ENCODE measurements at regions of chr1 and their contacts with region 1.

Region 1: DNA sequence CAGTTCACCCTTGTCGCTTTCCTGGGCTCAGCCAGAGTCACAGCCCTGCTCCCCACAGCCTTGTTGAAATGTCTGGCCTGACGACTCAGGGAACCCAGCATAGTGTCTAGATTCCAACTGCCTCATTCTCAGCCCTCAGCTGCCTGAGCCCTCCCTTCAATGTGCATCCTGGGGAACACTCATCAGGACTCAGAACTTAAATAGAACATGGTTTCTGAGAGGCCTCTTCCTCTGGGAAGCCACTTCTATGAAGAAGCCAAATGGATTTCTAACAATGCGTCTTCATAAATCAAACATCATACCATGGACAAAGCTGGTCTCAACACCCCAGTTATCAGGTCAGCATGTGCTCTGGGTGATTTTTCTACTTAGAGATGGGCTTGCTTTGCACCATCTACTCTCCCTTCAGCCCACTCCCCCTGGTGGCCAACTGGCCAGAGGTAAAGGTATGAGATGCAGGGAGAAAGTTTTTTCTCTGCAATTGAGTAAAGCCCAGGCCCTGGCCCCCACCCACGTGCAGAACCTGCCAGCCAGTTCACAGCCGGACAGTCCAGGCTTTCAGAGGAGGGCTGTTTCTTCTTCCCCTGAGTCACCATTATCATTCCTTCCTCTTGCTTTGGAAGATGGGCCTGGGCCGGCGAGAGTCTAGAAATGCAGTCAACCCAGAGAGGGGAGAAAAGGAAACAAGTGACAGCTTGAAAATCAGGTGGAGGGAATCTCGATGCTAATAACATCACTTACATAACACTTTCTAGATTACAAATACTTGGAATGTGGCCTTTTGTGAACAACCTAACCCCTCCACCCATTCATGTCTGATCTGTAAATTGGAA is 32.1 kb downstream of the CD244 start:
- DNase-seq: peak; percentile 86
- H3K4me3 ChIP-seq: no peak overlapping the region
- H3K27ac ChIP-seq: no peak overlapping the region
- H3K4me1 ChIP-seq: no peaks in the 10 kb centered on the region
- H3K27me3 ChIP-seq: peaks cover 0 to 5% (median 0%) of the 10 kb centered on the region in 4 donors
- CTCF ChIP-seq: peak in 1 of 3 experiments; percentile 13
- EP300 ChIP-seq: no peak
- POLR2A ChIP-seq: no peak

Region 2: DNA sequence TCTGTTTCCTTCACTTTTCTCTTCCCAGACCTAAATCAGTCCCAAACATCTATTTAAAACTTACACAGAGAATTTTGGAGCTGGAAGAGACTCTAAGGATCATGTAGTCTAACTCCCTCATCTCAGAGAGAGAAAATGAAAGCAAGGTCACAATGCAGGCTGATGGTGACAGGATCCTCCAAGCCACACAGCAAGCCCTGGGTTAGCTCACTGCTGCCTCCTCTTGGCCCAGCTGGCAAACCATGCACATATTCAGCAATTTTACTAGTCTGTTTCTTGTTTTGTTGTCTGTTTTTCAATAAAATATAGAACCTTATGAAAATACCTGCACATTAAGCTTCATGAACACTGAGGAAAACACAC is 62.3 kb before region 1 on chr1:
- intact Hi-C with region 1: no loop called
- DNase-seq: no peak
- H3K4me3 ChIP-seq: no peak overlapping the region
- H3K27ac ChIP-seq: no peak overlapping the region
- H3K4me1 ChIP-seq: no peaks in the 10 kb centered on the region
- H3K27me3 ChIP-seq: no peaks in the 10 kb centered on the region
- CTCF ChIP-seq: peak in 1 of 3 experiments; percentile 29
- EP300 ChIP-seq: no peak
- POLR2A ChIP-seq: no peak

Region 3: DNA sequence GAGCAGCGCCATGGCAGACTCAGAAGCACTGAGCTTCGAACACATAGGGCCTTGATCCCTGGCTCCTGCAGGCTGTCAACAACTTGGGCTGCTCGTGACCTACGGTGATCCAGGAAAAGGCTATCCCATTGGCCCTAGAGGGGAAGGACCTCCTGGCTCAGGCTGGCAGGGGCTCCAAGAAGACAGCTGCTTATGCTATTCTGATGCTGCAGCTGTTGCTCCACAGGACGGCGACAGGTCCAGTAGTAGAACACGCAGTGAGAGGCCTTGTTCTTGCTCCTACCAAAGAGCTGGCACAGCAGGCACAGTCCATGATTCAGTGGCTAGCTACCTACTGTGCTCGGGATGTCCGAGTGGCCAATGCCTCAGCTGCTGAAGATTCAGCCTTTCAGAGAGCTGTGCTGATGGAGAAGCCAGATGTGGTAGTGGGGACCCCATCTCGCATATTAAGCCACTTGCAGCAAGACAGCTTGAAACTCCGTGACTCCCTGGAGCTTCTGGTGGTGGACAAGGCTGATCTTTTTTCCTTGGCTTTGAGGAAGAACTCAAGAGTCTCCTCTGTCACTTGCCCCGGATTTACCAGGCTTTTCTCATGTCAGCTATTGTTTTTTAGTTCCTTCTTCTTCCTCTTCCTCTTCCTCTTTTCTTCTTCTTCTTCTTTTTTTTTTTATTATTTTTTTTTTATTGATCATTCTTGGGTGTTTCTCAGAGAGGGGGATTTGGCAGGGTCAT is 105.2 kb after region 1 on chr1:
- intact Hi-C with region 1: no loop called
- DNase-seq: no peak
- H3K4me3 ChIP-seq: no peak overlapping the region
- H3K27ac ChIP-seq: no peak overlapping the region
- H3K4me1 ChIP-seq: no peaks in the 10 kb centered on the region
- H3K27me3 ChIP-seq: peaks cover 0 to 3% (median 0%) of the 10 kb centered on the region in 4 donors
- CTCF ChIP-seq: no peak
- EP300 ChIP-seq: no peak
- POLR2A ChIP-seq: no peak

Region 4: DNA sequence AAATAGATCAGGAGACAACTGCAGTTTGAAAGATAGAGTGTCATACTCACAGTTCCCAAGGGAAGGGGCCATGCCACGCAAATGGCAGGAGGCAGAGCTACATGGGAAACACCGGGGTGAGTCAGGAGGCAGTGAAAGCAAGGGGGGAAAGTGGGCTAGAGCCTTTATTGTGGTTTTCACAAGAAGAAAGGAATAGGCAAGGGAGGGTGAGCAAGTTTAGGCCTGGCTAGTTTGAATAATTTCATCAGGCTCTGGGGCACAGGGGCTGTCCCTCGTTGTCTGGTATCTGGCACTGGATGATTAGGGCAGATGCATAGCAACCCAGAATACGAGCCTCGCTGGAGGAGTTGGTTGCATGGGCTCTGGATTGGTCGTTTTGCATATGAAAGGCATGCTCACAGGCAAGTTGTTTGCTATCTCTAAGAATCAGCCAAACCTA is 141.1 kb after region 1 on chr1:
- intact Hi-C with region 1: no loop called
- DNase-seq: no peak
- H3K4me3 ChIP-seq: no peak overlapping the region
- H3K27ac ChIP-seq: no peak overlapping the region
- H3K4me1 ChIP-seq: no peaks in the 10 kb centered on the region
- H3K27me3 ChIP-seq: peaks cover 0 to 16% (median 0%) of the 10 kb centered on the region in 4 donors
- CTCF ChIP-seq: no peak
- EP300 ChIP-seq: no peak
- POLR2A ChIP-seq: no peak

Region 5: GRCh38 chr1:161117759-161118581 is 287.4 kb after region 1 on chr1 and contains the starts of genes NIT1 and PFDN2:
- intact Hi-C with region 1: loop called (anchors 10 kb)
- DNase-seq: peak; percentile 95
- H3K4me3 ChIP-seq: peak within 1 kb of the TSS; percentile 88 to 99 (median 96)
- H3K27ac ChIP-seq: peak within 1 kb of the TSS; percentile 93 to 96 (median 95)
- H3K4me1 ChIP-seq: peaks cover 47 to 73% (median 55%) of the 10 kb centered on the region in 4 donors
- H3K27me3 ChIP-seq: no peaks in the 10 kb centered on the region
- CTCF ChIP-seq: no peak
- EP300 ChIP-seq: no peak
- POLR2A ChIP-seq: peak; percentile 90
- total RNA-seq, gene NIT1: 32.8 to 35.6 (median 34.8) TPM
- total RNA-seq, gene PFDN2: 19.5 to 52.0 (median 40.5) TPM

Measured in esophagus muscularis mucosa (tissue), 4 donors.